Activated naive CD4-positive, alpha-beta T cell treated with anti-CD3 and anti-CD28 coated beads for 36 hours (primary cell): ENCODE measurements at regions of chr1 and their contacts with region 1.

Region 1: DNA sequence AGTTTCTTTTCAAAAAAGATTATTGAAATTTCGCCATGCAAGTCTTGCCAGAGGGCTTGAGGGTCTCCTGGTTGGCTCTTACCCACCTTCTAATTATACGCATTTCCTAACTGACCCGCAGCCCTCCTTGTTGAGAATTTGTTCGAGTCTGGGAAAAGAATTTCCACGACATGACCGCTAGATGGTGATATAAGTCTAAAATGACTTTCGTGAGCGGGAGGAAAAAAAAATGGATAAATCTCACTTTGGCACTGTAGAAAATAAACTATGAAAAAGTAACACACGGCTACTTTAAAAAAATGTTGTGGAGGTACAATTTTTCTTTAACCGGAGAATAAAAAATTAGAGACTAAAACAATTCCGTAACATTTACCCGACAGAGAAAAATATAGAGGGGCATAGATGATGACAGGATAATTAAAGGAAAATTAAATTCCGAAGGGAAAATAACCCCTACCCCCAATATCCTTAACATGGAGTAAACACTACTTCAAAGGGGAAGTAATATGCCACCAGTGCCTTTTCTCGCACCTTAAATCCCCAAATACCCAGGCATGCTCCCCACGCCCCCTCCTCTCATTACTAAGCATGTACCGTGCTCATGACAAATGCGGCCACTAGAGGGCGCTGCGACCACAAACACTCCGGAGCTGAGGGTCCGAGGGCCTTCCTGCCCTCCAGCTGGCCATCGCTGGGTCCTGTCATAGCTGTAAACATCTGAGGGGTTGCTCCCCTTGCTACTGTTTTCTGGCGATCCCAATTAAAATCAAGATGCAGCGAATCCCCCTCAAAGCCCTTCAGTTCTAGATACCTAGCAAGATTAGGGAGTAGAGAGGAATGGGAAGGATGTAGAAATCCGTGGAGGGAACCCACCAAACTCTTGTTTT is 266.9 kb downstream of the ASTN1 start:
- DNase-seq: peak; percentile 53
- H3K4me3 Mint-ChIP-seq: no peak overlapping the region
- H3K27ac Mint-ChIP-seq: no peak overlapping the region
- H3K4me1 Mint-ChIP-seq: peaks cover 4% of the 10 kb centered on the region
- H3K27me3 Mint-ChIP-seq: peaks cover 12% of the 10 kb centered on the region

Region 2: DNA sequence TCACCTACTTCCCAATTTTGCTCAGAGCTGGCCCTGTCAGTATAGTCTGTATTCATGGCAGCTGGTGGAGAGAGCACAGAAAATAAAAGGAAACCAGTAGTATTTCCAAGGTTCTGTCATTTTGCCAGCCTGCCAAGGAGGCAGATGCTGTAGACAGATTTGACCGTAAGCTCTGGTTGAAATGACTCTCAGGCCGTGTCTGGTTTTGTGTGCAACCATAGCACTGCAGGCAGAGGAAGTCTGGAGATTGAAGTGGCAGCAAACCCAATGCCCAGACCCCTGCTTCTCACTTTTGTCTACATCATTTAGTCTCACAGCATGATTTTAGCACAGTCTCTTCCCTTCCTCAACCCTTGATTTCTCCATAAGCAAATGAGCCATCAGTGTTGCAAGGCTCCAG is 142.9 kb before region 1 on chr1:
- CTCF ChIA-PET with region 1: no interaction called
- intact Hi-C with region 1: no loop called
- DNase-seq: no peak
- H3K4me3 Mint-ChIP-seq: no peak overlapping the region
- H3K27ac Mint-ChIP-seq: no peak overlapping the region
- H3K4me1 Mint-ChIP-seq: no peaks in the 10 kb centered on the region
- H3K27me3 Mint-ChIP-seq: no peaks in the 10 kb centered on the region

Region 3: GRCh38 chr1:176949033-176949662 is 51.6 kb after region 1 on chr1:
- CTCF ChIA-PET with region 1: interaction called, 5 read pairs
- intact Hi-C with region 1: loop called (anchors 2 kb)
- DNase-seq: peak; percentile 30
- H3K4me3 Mint-ChIP-seq: no peak overlapping the region
- H3K27ac Mint-ChIP-seq: no peak overlapping the region
- H3K4me1 Mint-ChIP-seq: no peaks in the 10 kb centered on the region
- H3K27me3 Mint-ChIP-seq: peaks cover 8% of the 10 kb centered on the region

Region 4: DNA sequence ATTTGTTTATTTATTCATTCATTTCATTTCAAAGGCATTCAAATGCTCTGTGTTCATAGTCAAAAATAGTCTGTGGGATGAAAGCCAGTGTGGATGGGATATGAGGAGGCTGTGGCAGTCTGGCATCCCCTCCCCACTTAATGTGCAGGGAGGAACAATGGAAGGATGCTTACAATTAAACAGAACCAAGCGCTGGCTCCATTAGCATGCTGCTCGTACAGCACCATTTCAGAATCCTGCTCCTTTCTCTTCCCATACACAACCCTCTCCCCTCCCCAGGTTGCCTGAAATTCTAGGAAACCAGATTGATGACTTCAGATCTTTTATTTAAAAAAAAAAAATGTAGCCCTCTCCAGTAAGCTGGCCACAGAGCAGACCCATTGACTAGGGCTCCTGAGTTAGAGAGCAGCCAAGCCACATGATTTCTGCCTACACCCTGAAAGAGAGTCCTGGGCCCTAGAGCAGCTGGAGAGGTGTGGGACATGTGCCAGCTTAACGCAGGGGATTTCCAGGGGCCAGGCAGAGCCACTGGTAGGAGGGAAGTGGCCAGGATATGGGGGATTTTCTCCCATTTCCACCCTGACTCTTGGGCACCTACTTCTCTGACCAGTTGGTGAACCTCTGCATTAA is 61.7 kb after region 1 on chr1:
- CTCF ChIA-PET with region 1: no interaction called
- intact Hi-C with region 1: no loop called
- DNase-seq: no peak
- H3K4me3 Mint-ChIP-seq: no peak overlapping the region
- H3K27ac Mint-ChIP-seq: no peak overlapping the region
- H3K4me1 Mint-ChIP-seq: no peaks in the 10 kb centered on the region
- H3K27me3 Mint-ChIP-seq: no peaks in the 10 kb centered on the region

Region 5: GRCh38 chr1:177007437-177008161 is 110.0 kb after region 1 on chr1:
- CTCF ChIA-PET with region 1: no interaction called
- intact Hi-C with region 1: no loop called
- DNase-seq: no peak
- H3K4me3 Mint-ChIP-seq: no peak overlapping the region
- H3K27ac Mint-ChIP-seq: no peak overlapping the region
- H3K4me1 Mint-ChIP-seq: no peaks in the 10 kb centered on the region
- H3K27me3 Mint-ChIP-seq: no peaks in the 10 kb centered on the region

Region 6: DNA sequence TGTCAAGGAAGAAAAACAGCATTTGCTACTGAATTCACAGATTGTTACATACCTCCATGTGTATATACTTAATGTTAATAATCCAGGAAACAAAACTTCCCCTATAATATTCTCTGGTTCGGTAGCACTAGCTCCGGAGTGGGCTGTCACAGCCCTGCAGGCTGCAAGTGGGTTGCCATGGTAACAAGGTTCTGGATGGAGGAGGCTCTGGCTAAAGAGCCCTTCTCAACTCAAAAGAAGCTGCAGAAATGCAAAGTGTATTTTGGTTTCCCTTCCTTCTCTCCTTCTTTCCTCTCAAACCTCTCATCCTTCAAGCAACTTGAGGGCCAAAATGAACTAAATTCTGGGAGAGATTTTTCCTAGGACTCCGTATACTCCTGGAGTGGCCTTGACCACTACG is 221.7 kb after region 1 on chr1:
- CTCF ChIA-PET with region 1: no interaction called
- intact Hi-C with region 1: no loop called
- DNase-seq: no peak
- H3K4me3 Mint-ChIP-seq: no peak overlapping the region
- H3K27ac Mint-ChIP-seq: no peak overlapping the region
- H3K4me1 Mint-ChIP-seq: no peaks in the 10 kb centered on the region
- H3K27me3 Mint-ChIP-seq: peaks cover 3% of the 10 kb centered on the region

Region 7: GRCh38 chr1:177181631-177182291 is 284.2 kb after region 1 on chr1:
- CTCF ChIA-PET with region 1: no interaction called
- intact Hi-C with region 1: loop called (anchors 1 kb)
- DNase-seq: peak; percentile 42
- H3K4me3 Mint-ChIP-seq: peak overlapping the region; percentile 36
- H3K27ac Mint-ChIP-seq: no peak overlapping the region
- H3K4me1 Mint-ChIP-seq: peaks cover 8% of the 10 kb centered on the region
- H3K27me3 Mint-ChIP-seq: peaks cover 48% of the 10 kb centered on the region